PC-9 (cell line): ENCODE measurements at regions of chr3 and their contacts with region 1.

Region 1: DNA sequence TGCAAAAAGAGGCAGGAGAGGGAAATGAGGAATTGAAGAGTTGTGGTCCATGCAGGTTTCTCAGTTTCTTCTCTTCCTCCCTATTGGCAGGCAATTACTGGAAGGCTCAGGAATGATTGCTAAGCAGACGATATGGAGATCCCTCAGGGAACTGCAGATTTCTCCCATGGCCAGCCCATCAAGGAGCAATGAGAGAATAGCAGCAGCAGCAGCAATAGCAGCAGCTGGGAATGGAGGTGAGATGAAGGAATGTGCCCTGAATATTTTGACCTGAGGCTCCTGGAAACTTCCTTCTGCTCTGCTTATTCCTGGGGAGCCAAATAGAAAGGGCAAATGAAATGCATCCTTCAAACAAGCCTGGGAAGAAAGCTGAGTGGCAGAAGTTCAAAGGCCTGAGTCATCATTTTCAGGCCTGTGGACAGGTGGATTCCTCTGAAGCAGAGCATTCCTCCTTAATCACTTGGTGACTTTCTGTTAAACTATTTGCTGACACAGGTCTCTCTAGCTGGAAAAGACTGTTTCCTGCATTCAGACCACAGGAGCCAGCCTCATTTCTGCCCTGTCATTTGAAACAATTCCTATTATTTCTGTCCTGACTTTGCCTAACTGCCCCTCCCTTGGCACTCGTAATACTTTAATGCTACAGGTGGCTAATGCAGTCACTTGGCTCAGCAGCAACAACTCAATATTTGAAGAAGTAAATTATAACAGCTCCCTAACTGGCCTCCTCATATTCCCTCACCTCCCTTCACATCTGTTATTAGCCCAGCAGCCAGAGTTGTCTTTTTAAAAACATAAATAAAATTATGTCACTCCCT is 146.9 kb upstream of the GADL1 start:
- DNase-seq: peak; percentile 77 to 96
- H3K4me3 ChIP-seq: no peak overlapping the region
- H3K27ac ChIP-seq: peak overlapping the region; percentile 51
- H3K4me1 ChIP-seq: peaks cover 14% of the 10 kb centered on the region
- H3K27me3 ChIP-seq: no peaks in the 10 kb centered on the region
- CTCF ChIP-seq: no peak

Region 2: GRCh38 chr3:30708472-30708871 is 332.9 kb before region 1 on chr3:
- CTCF ChIA-PET with region 1: no interaction called
- POLR2A ChIA-PET with region 1: no interaction called
- intact Hi-C with region 1: no loop called
- DNase-seq: no peak
- H3K4me3 ChIP-seq: no peak overlapping the region
- H3K27ac ChIP-seq: no peak overlapping the region
- H3K4me1 ChIP-seq: no peaks in the 10 kb centered on the region
- H3K27me3 ChIP-seq: no peaks in the 10 kb centered on the region
- CTCF ChIP-seq: no peak

Region 3: DNA sequence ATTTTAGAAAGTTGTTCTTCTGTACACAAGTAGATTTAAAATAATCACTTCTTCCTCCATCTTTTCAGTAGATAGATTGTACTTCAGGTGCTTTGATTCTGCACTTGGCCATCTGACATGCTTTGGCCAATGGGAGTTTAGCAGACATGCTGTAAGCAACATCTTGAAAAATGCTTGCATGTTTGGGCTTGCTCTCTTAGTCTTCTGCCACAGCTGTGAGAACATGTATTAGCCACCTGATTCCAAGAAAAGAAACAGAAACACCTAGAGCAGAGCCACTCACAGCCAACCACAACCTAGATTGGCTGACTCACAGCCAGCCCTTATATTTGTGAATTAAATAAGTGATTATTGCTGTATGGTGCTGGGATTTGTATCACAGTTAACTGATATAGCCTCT is 76.8 kb before region 1 on chr3:
- CTCF ChIA-PET with region 1: no interaction called
- POLR2A ChIA-PET with region 1: no interaction called
- intact Hi-C with region 1: no loop called
- DNase-seq: no peak
- H3K4me3 ChIP-seq: no peak overlapping the region
- H3K27ac ChIP-seq: no peak overlapping the region
- H3K4me1 ChIP-seq: no peaks in the 10 kb centered on the region
- H3K27me3 ChIP-seq: no peaks in the 10 kb centered on the region
- CTCF ChIP-seq: no peak

Region 4: DNA sequence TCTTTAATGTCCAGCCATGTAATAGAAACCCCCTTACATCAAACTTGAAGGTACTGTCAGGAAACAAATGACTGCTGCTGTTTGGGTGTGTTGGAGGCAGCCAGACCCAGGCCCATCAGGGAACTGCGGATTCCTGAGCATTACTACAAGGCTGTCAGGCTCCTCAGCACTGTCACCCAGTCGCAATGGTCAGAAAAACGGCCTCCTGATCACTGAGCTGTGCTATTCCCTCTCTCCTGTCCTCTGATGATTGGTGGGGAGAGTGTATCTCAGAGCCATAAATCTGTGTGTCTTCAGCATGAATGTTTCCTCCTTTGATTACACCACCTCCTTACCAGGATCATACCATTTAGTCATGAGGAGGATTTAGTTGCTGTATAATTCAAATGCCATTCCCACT is 11.7 kb before region 1 on chr3:
- CTCF ChIA-PET with region 1: no interaction called
- POLR2A ChIA-PET with region 1: no interaction called
- intact Hi-C with region 1: loop called (anchors 1 kb)
- DNase-seq: no peak
- H3K4me3 ChIP-seq: no peak overlapping the region
- H3K27ac ChIP-seq: no peak overlapping the region
- H3K4me1 ChIP-seq: no peaks in the 10 kb centered on the region
- H3K27me3 ChIP-seq: no peaks in the 10 kb centered on the region
- CTCF ChIP-seq: no peak

Region 5: DNA sequence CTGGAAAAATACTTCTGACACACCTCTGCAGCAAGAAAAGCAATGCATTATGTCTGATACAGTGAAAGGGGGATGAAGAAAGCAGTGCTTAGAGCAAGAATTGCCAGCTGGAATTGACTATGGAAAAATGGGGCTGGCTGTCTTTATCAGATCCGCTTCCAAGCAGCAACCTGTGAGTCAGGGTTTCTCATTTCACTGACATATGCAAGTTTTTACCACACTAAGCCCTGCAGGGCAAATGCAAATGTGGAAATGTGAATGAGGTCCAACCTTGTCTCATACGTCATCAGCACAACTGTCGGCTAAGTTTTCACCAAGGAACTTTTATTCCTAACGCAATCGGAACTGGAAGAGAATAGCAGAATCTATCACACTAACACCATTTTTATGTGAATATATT is 25.6 kb after region 1 on chr3:
- CTCF ChIA-PET with region 1: no interaction called
- POLR2A ChIA-PET with region 1: no interaction called
- intact Hi-C with region 1: loop called (anchors 1 kb)
- DNase-seq: peak; percentile 61 to 72
- H3K4me3 ChIP-seq: no peak overlapping the region
- H3K27ac ChIP-seq: no peak overlapping the region
- H3K4me1 ChIP-seq: no peaks in the 10 kb centered on the region; the same call in 1 of the 2 replicates
- H3K27me3 ChIP-seq: no peaks in the 10 kb centered on the region
- CTCF ChIP-seq: no peak

Region 6: GRCh38 chr3:31671976-31672375 is 630.6 kb after region 1 on chr3:
- CTCF ChIA-PET with region 1: no interaction called
- POLR2A ChIA-PET with region 1: no interaction called
- intact Hi-C with region 1: no loop called
- DNase-seq: no peak
- H3K4me3 ChIP-seq: no peak overlapping the region
- H3K27ac ChIP-seq: no peak overlapping the region
- H3K4me1 ChIP-seq: peaks cover 15% of the 10 kb centered on the region
- H3K27me3 ChIP-seq: no peaks in the 10 kb centered on the region
- CTCF ChIP-seq: no peak